Endothelial cell of umbilical vein (primary cell): ENCODE measurements at regions of chr17 and their contacts with region 1.

Region 1: GRCh38 chr17:65055348-65056261 is 935 bp downstream of the GNA13 start:
- DNase-seq: peak; percentile 53
- H3K4me3 ChIP-seq: peak overlapping the region; percentile 34 to 78 (median 74)
- H3K27ac ChIP-seq: peak overlapping the region; percentile 2
- H3K4me1 ChIP-seq: peaks cover 11% of the 10 kb centered on the region
- H3K27me3 ChIP-seq: no peaks in the 10 kb centered on the region
- CTCF ChIP-seq: no peak
- POLR2A ChIP-seq: no peak

Region 2: GRCh38 chr17:64975329-64976087 is 80.1 kb before region 1 on chr17:
- CTCF ChIA-PET with region 1: no interaction called
- POLR2A ChIA-PET with region 1: no interaction called
- dilution Hi-C with region 1: no loop called
- intact Hi-C with region 1: loop called (anchors 2 kb)
- DNase-seq: peak; percentile 96
- H3K4me3 ChIP-seq: peak overlapping the region; percentile 19 to 77 (median 55)
- H3K27ac ChIP-seq: peak overlapping the region; percentile 90
- H3K4me1 ChIP-seq: peaks cover 17% of the 10 kb centered on the region
- H3K27me3 ChIP-seq: no peaks in the 10 kb centered on the region
- CTCF ChIP-seq: no peak
- POLR2A ChIP-seq: peak; percentile 78

Region 3: GRCh38 chr17:65027305-65027704 is 28.3 kb before region 1 on chr17:
- CTCF ChIA-PET with region 1: no interaction called
- POLR2A ChIA-PET with region 1: interaction called, 3 read pairs
- dilution Hi-C with region 1: no loop called
- intact Hi-C with region 1: loop called (anchors 2 kb)
- DNase-seq: peak; percentile 82
- H3K4me3 ChIP-seq: no peak overlapping the region
- H3K27ac ChIP-seq: peak overlapping the region; percentile 74
- H3K4me1 ChIP-seq: peaks cover 10% of the 10 kb centered on the region
- H3K27me3 ChIP-seq: no peaks in the 10 kb centered on the region
- CTCF ChIP-seq: peak; percentile 26 to 42
- POLR2A ChIP-seq: no peak

Region 4: DNA sequence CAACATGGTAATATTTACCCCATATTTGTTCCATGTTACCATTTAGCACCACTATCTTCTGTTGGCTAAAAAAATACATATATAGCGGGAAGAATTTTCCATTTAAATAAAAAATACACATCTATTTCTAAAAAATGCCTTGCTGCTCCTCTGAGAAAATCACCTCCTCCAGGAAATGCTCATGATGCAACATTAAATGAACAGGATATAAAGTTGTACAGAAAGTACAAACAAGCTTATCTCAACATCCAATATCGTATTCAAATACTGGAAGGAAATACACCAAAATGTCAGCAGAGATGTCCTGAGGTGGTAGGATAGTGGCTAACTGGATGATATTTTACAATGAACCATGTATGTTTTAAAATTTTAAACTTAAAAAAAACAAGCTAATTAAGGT is 20.4 kb before region 1 on chr17:
- CTCF ChIA-PET with region 1: interaction called, 6 read pairs
- POLR2A ChIA-PET with region 1: no interaction called
- dilution Hi-C with region 1: no loop called
- intact Hi-C with region 1: loop called (anchors 2 kb)
- DNase-seq: peak; percentile 41
- H3K4me3 ChIP-seq: no peak overlapping the region
- H3K27ac ChIP-seq: peak overlapping the region; percentile 44
- H3K4me1 ChIP-seq: peaks cover 16% of the 10 kb centered on the region
- H3K27me3 ChIP-seq: no peaks in the 10 kb centered on the region
- CTCF ChIP-seq: no peak
- POLR2A ChIP-seq: no peak

Region 5: GRCh38 chr17:65065906-65066305 is 10.3 kb after region 1 on chr17:
- CTCF ChIA-PET with region 1: no interaction called
- POLR2A ChIA-PET with region 1: no interaction called
- dilution Hi-C with region 1: no loop called
- intact Hi-C with region 1: no loop called
- DNase-seq: no peak
- H3K4me3 ChIP-seq: no peak overlapping the region
- H3K27ac ChIP-seq: no peak overlapping the region
- H3K4me1 ChIP-seq: no peaks in the 10 kb centered on the region
- H3K27me3 ChIP-seq: peaks cover 10 to 13% of the 10 kb centered on the region in 2 experiments
- CTCF ChIP-seq: no peak
- POLR2A ChIP-seq: no peak

Region 6: GRCh38 chr17:65198653-65199382 is 143.2 kb after region 1 on chr17:
- CTCF ChIA-PET with region 1: interaction called, 8 read pairs
- POLR2A ChIA-PET with region 1: no interaction called
- dilution Hi-C with region 1: no loop called
- intact Hi-C with region 1: loop called (anchors 2 kb)
- DNase-seq: peak; percentile 67
- H3K4me3 ChIP-seq: no peak overlapping the region
- H3K27ac ChIP-seq: no peak overlapping the region
- H3K4me1 ChIP-seq: no peaks in the 10 kb centered on the region
- H3K27me3 ChIP-seq: peaks cover 0 to 4% of the 10 kb centered on the region in 2 experiments
- CTCF ChIP-seq: peak; percentile 41 to 54
- POLR2A ChIP-seq: no peak